ENCODE measurements at regions of chr11 and their contacts with region 1.

Region 1: DNA sequence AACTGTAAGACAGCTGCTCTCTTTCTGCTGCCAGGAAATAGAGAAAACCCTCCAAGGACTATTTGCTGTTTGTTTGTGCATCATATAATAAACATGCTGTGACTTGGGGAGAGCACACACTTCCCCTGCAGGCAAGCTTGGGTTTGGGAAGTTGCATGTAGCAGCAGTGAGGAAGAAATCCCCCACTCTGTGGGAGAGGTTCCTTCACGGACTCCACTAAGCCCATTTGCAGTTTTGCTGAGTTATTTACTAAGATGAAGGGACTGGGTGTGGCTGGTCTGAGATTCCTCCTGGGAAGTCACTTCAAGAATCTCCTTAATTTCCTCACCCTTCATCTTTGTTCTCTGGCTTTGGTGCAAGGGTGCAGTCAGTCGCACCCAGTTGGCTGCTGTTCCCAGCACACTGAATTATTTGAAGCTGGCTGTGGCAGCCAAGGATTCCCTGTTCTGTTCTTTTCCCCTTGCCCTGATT is 104.9 kb downstream of the ARFGAP2 start:
- DNase-seq: no peak
- ATAC-seq: 0 out of 2 replicates have a peak, but pooled peaks have one; percentile 20
- H3K4me3 Mint-ChIP-seq: no peak overlapping the region
- H3K27ac Mint-ChIP-seq: peak overlapping the region; percentile 84
- H3K4me1 Mint-ChIP-seq: peaks cover 25% of the 10 kb centered on the region
- H3K27me3 Mint-ChIP-seq: no peaks in the 10 kb centered on the region
- CTCF ChIP-seq: no peak

Region 2: DNA sequence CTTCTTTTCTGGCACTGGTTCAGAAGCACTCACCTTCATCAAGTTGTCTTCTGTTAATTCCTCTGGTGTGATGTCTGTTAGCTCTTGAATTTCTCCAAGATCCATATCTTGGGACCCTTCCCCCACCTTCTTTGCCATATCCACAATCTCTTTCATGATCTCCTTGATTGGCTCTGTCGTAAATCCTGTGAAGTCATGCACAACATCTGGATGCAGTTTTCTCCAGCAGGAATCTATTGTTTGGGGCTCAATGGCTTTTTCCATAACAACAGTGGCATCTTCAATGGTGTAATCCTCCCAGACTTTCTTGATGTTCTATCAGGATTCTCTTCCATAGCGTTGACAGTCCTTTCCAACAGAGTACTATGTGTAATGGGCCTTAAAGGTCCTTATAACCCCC is 38.4 kb before region 1 on chr11:
- CTCF ChIA-PET with region 1: no interaction called
- POLR2A ChIA-PET with region 1: no interaction called
- DNase-seq: no peak
- ATAC-seq: peak; percentile 34
- H3K4me3 Mint-ChIP-seq: no peak overlapping the region
- H3K27ac Mint-ChIP-seq: no peak overlapping the region
- H3K4me1 Mint-ChIP-seq: peaks cover 9% of the 10 kb centered on the region
- H3K27me3 Mint-ChIP-seq: no peaks in the 10 kb centered on the region
- CTCF ChIP-seq: no peak

Region 3: GRCh38 chr11:47056261-47056915 is 15.4 kb before region 1 on chr11:
- CTCF ChIA-PET with region 1: interaction called, 4 read pairs
- POLR2A ChIA-PET with region 1: interaction called, 10 read pairs
- DNase-seq: no peak
- ATAC-seq: no peak
- H3K4me3 Mint-ChIP-seq: no peak overlapping the region
- H3K27ac Mint-ChIP-seq: peak overlapping the region; percentile 29
- H3K4me1 Mint-ChIP-seq: peaks cover 32% of the 10 kb centered on the region
- H3K27me3 Mint-ChIP-seq: no peaks in the 10 kb centered on the region
- CTCF ChIP-seq: no peak